MCF 10A (cell line): ENCODE measurements at regions of chr10 and their contacts with region 1.

Region 1: GRCh38 chr10:19819419-19820033 is 3.3 kb downstream of the PLXDC2 start:
- DNase-seq: peak; percentile 89
- H3K4me3 Mint-ChIP-seq: no peak overlapping the region
- H3K27ac Mint-ChIP-seq: peak overlapping the region; percentile 6
- H3K4me1 Mint-ChIP-seq: peaks cover 30% of the 10 kb centered on the region
- H3K27me3 Mint-ChIP-seq: no peaks in the 10 kb centered on the region
- CTCF ChIP-seq: peak; percentile 69

Region 2: GRCh38 chr10:18793951-18794350 is 1025.6 kb before region 1 on chr10:
- CTCF ChIA-PET with region 1: no interaction called
- POLR2A ChIA-PET with region 1: no interaction called
- intact Hi-C with region 1: loop called (anchors 5 kb)
- DNase-seq: peak; percentile 49
- H3K4me3 Mint-ChIP-seq: no peak overlapping the region
- H3K27ac Mint-ChIP-seq: no peak overlapping the region
- H3K4me1 Mint-ChIP-seq: peaks cover 7% of the 10 kb centered on the region
- H3K27me3 Mint-ChIP-seq: no peaks in the 10 kb centered on the region
- CTCF ChIP-seq: peak; percentile 46

Region 3: GRCh38 chr10:19629567-19629966 is 190.0 kb before region 1 on chr10:
- CTCF ChIA-PET with region 1: no interaction called
- POLR2A ChIA-PET with region 1: no interaction called
- intact Hi-C with region 1: no loop called
- DNase-seq: no peak
- H3K4me3 Mint-ChIP-seq: no peak overlapping the region
- H3K27ac Mint-ChIP-seq: no peak overlapping the region
- H3K4me1 Mint-ChIP-seq: no peaks in the 10 kb centered on the region
- H3K27me3 Mint-ChIP-seq: no peaks in the 10 kb centered on the region
- CTCF ChIP-seq: no peak

Region 4: DNA sequence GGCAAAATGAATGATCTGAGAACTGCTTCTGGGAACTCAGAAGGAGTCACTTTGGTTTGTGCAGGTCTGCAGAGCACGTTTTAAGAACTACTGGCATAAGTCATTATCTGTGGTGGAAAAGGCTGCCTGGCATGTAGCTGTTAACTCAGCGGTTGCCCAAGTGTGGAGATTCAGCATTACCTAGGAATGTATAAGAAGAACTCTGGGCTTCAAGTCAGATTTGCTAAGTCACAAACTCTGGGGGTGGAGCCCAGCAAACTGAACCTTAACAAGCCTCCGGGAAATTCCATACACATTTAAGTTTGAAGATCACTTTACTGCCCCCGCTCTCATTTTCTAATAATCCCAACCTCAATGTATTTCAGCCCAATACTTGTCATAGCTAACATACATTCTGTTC is 27.8 kb after region 1 on chr10:
- CTCF ChIA-PET with region 1: no interaction called
- POLR2A ChIA-PET with region 1: interaction called, 6 read pairs
- intact Hi-C with region 1: loop called (anchors 1 kb)
- DNase-seq: peak; percentile 84
- H3K4me3 Mint-ChIP-seq: peak overlapping the region; percentile 53
- H3K27ac Mint-ChIP-seq: peak overlapping the region; percentile 65
- H3K4me1 Mint-ChIP-seq: peaks cover 34% of the 10 kb centered on the region
- H3K27me3 Mint-ChIP-seq: no peaks in the 10 kb centered on the region
- CTCF ChIP-seq: no peak

Region 5: GRCh38 chr10:20004087-20004523 is 184.6 kb after region 1 on chr10:
- CTCF ChIA-PET with region 1: interaction called, 3 read pairs
- POLR2A ChIA-PET with region 1: interaction called, 4 read pairs
- intact Hi-C with region 1: loop called (anchors 5 kb)
- DNase-seq: peak; percentile 52
- H3K4me3 Mint-ChIP-seq: peak overlapping the region; percentile 54
- H3K27ac Mint-ChIP-seq: peak overlapping the region; percentile 91
- H3K4me1 Mint-ChIP-seq: peaks cover 27% of the 10 kb centered on the region
- H3K27me3 Mint-ChIP-seq: no peaks in the 10 kb centered on the region
- CTCF ChIP-seq: no peak

Region 6: DNA sequence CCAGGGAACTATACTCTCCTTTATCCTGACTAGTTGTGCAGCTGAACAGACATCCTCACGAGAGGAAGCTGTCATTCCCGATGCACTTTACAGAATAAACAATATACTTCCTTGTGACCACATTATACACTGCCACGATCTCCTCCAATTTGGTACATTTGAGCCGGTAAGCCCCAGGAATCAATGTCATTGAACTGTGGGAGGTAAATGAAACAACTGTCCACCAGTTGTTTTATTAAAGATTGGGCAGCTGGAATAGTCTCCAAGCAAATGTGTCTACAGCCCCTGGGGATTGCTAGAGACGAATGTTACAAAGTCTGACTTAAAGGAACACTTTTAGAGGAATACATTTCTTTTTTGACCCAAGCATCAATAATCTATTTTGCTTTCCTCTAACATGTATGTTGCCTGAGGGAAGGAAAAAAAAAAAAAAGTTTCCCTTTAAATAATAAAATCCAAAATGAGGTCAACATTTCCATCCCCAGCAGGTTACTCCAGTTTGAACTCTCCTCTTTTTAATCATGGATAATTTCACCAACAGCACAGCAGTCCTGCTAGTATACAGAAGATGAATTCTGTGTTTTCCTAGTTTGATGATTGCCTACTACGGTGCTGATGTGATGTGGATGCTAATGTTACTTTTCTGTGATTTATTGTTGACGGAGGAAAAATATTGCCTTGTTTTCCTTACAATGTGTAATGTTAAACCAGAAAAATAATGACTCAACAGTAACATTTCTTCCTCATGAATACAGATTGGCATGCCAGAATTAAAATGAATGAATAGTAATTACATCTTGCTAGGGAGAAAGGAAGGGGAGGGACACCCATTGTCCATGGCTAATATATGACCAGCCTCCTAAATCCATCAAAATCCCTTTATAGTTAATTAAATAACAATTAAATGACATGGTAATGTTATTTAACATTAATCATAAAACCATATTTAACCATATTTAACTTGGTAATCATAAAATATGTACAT is 716.7 kb after region 1 on chr10:
- CTCF ChIA-PET with region 1: interaction called, 3 read pairs
- POLR2A ChIA-PET with region 1: interaction called, 3 read pairs
- intact Hi-C with region 1: loop called (anchors 1 kb)
- DNase-seq: no peak
- H3K4me3 Mint-ChIP-seq: no peak overlapping the region
- H3K27ac Mint-ChIP-seq: no peak overlapping the region
- H3K4me1 Mint-ChIP-seq: peaks cover 10% of the 10 kb centered on the region
- H3K27me3 Mint-ChIP-seq: no peaks in the 10 kb centered on the region
- CTCF ChIP-seq: no peak

Region 7: GRCh38 chr10:20858292-20859124 is 1039.0 kb after region 1 on chr10:
- CTCF ChIA-PET with region 1: no interaction called
- POLR2A ChIA-PET with region 1: interaction called, 3 read pairs
- intact Hi-C with region 1: loop called (anchors 2 kb)
- DNase-seq: peak; percentile 53
- H3K4me3 Mint-ChIP-seq: no peak overlapping the region
- H3K27ac Mint-ChIP-seq: no peak overlapping the region
- H3K4me1 Mint-ChIP-seq: peaks cover 2% of the 10 kb centered on the region
- H3K27me3 Mint-ChIP-seq: no peaks in the 10 kb centered on the region
- CTCF ChIP-seq: peak; percentile 37